ENCODE measurements at regions of chr10 and their contacts with region 1.

Region 1: GRCh38 chr10:52644373-52645186 is 128.0 kb downstream of the MBL2 start:
- DNase-seq: peak in 1 of 2 experiments; percentile 59
- H3K4me3 ChIP-seq: no peak overlapping the region
- H3K27ac ChIP-seq: no peak overlapping the region
- H3K4me1 ChIP-seq: no peaks in the 10 kb centered on the region
- H3K27me3 ChIP-seq: no peaks in the 10 kb centered on the region
- CTCF ChIP-seq: peak in 2 of 3 experiments; percentile 72 to 81; a peak in 3 of 4 replicates
- EP300 ChIP-seq: no peak
- POLR2A ChIP-seq: no peak
- RAD21 ChIP-seq: peak; percentile 86 to 91

Region 2: GRCh38 chr10:52308251-52309031 is 336.1 kb before region 1 on chr10:
- CTCF ChIA-PET with region 1: interaction called, 10 read pairs
- POLR2A ChIA-PET with region 1: no interaction called
- DNase-seq: peak in 1 of 2 experiments; percentile 77
- H3K4me3 ChIP-seq: peak overlapping the region; percentile 46 to 67 (median 58)
- H3K27ac ChIP-seq: no peak overlapping the region
- H3K4me1 ChIP-seq: peaks cover 0 to 5% (median 3%) of the 10 kb centered on the region in 4 experiments; a peak in 4 of 7 replicates
- H3K27me3 ChIP-seq: peaks cover 37 to 51% (median 47%) of the 10 kb centered on the region in 4 experiments
- CTCF ChIP-seq: peak; percentile 58 to 74 (median 63)
- EP300 ChIP-seq: no peak
- POLR2A ChIP-seq: no peak
- RAD21 ChIP-seq: peak; percentile 85 to 92

Region 3: GRCh38 chr10:52566471-52567246 is 77.9 kb before region 1 on chr10:
- CTCF ChIA-PET with region 1: interaction called, 11 read pairs
- POLR2A ChIA-PET with region 1: no interaction called
- DNase-seq: no peak
- H3K4me3 ChIP-seq: no peak overlapping the region
- H3K27ac ChIP-seq: no peak overlapping the region
- H3K4me1 ChIP-seq: no peaks in the 10 kb centered on the region
- H3K27me3 ChIP-seq: no peaks in the 10 kb centered on the region
- CTCF ChIP-seq: peak in 2 of 3 experiments; percentile 18 to 24; a peak in 2 of 4 replicates
- EP300 ChIP-seq: no peak
- POLR2A ChIP-seq: no peak
- RAD21 ChIP-seq: peak; percentile 48 to 62

Region 4: DNA sequence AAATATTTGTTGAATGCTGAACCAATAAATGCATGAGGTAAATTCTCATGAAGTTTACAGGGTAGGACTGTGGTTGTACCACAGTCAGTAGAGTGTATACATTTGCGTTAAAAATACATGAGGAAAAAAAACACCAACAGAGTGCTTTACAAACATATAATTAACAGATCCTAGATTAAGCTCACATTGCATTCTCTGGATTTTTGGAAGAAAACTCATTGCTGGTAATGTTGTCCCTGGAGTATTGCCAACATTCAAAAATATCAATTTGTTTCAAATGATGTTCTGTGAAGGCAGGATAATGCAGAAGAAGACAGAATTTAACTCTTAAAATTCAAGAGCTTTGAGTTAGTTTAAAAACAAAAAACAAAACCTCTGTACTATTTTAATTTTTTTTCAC is 32.5 kb after region 1 on chr10:
- CTCF ChIA-PET with region 1: interaction called, 15 read pairs
- POLR2A ChIA-PET with region 1: no interaction called
- DNase-seq: no peak
- H3K4me3 ChIP-seq: no peak overlapping the region
- H3K27ac ChIP-seq: no peak overlapping the region
- H3K4me1 ChIP-seq: no peaks in the 10 kb centered on the region
- H3K27me3 ChIP-seq: no peaks in the 10 kb centered on the region
- CTCF ChIP-seq: no peak
- EP300 ChIP-seq: no peak
- POLR2A ChIP-seq: no peak
- RAD21 ChIP-seq: no peak

Region 5: DNA sequence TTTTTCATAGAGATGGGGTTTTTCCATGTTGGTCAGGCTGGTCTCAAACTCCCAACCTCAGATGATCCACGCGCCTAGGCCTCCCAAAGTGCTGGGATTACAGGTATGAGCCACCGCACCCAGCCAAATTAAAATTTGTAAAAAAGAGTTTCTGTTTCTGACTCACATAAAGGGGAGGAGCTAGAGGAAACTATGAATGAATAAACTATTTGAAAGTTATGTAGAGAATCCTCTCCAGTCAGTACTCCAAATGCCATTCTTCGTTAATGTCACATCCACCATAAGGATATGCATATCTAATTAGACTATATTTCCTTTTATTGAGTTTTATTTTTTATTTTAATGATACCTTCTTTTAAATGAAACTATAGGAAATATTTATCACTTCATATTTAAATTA is 75.4 kb after region 1 on chr10:
- CTCF ChIA-PET with region 1: interaction called, 24 read pairs
- POLR2A ChIA-PET with region 1: no interaction called
- DNase-seq: no peak
- H3K4me3 ChIP-seq: no peak overlapping the region
- H3K27ac ChIP-seq: no peak overlapping the region
- H3K4me1 ChIP-seq: no peaks in the 10 kb centered on the region
- H3K27me3 ChIP-seq: no peaks in the 10 kb centered on the region
- CTCF ChIP-seq: no peak
- EP300 ChIP-seq: no peak
- POLR2A ChIP-seq: no peak
- RAD21 ChIP-seq: no peak

Region 6: DNA sequence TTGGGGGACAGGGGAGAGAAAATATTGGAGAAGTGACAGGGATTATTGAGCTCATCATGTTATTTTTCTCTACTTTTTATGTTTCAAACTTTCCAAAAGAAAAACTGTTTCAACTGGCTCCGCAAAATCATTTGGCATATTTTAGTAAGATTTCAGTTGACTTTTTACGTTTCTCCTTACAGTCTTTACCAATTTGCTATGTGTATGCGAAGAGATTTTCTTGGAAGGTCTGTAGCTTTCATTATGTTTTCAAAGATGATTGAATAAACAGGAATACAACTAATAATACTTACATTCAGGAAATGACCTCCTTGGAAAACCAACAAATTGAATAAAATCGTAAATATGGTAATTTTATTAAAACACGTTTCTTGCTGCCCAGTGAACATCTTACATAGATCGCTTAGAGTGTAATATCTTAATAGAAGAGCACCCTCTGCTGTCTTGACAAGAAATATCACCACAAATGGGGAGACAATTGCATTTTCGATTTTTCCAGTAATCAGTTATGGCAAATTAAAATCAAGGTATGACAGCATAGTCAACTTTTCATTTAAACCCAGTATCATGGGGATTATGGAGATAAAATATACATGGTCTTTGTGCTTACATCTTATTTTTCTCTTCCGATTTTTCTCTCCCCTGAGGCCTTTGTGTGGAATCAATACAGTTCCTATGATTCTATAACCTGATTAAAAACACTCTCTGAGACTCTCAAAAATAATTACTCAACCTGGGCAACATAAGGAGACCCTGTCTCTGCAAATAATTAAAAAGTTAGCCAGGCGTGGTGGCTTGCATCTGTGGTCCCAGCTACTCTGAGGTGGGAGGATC is 84.9 kb after region 1 on chr10:
- CTCF ChIA-PET with region 1: interaction called, 70 read pairs
- POLR2A ChIA-PET with region 1: no interaction called
- DNase-seq: no peak
- H3K4me3 ChIP-seq: no peak overlapping the region
- H3K27ac ChIP-seq: no peak overlapping the region
- H3K4me1 ChIP-seq: no peaks in the 10 kb centered on the region
- H3K27me3 ChIP-seq: no peaks in the 10 kb centered on the region
- CTCF ChIP-seq: peak in 2 of 3 experiments; percentile 28 to 38; a peak in 2 of 4 replicates
- EP300 ChIP-seq: no peak
- POLR2A ChIP-seq: no peak
- RAD21 ChIP-seq: peak; percentile 67 to 69

Region 7: DNA sequence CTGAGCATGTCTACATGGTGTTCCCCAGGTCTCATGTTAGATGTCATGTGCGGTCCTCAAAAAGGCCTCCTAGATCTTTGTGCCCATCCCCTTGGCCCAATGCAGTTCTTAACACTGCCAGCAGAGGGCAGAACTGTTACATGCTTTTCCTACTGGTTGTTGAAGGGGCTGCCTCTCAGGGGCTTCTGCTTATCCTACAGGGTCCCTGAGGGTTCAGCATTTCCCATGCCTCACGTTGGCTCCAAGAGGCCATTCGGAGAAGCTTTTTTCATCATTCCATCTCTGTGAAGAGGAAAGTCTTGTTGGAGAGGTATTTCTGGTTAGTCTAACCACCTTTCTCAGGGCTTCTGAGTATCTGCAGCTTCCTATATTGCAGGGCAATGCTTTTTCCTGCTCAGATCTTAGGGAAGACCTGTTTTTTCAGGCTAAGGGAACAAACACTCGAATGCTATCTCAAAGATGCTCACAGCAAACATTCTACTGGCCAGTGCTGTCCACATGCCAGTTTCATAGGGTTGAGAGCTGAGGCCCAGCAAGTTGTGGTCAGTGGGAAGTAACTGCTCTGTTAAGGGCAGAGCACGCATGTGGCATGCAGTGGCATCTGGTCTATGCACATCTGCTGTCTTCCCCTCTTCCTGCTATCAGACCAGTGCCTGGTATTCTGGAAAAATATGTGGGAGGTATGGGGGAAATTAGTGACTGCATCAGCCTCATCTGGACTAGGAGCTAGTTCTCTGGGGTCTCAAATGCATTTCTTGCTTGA is 96.5 kb after region 1 on chr10:
- CTCF ChIA-PET with region 1: interaction called, 31 read pairs
- POLR2A ChIA-PET with region 1: no interaction called
- DNase-seq: peak; percentile 31 to 94
- H3K4me3 ChIP-seq: no peak overlapping the region
- H3K27ac ChIP-seq: no peak overlapping the region
- H3K4me1 ChIP-seq: no peaks in the 10 kb centered on the region
- H3K27me3 ChIP-seq: no peaks in the 10 kb centered on the region
- CTCF ChIP-seq: peak; percentile 73 to 95 (median 94)
- EP300 ChIP-seq: no peak
- POLR2A ChIP-seq: no peak
- RAD21 ChIP-seq: peak; percentile 81 to 89